Activated CD4-positive, alpha-beta T cell treated with anti-CD3 and anti-CD28 coated beads for 36 hours (primary cell): ENCODE measurements at regions of chr3 and their contacts with region 1.

Region 1: GRCh38 chr3:49469936-49470713 is at the start of gene DAG1:
- DNase-seq: peak; percentile 98
- ATAC-seq: peak; percentile 92
- H3K4me3 Mint-ChIP-seq: peak within 1 kb of the TSS; percentile 81
- H3K27ac Mint-ChIP-seq: peak within 1 kb of the TSS; percentile 92
- H3K4me1 Mint-ChIP-seq: peaks cover 20% of the 10 kb centered on the region
- H3K27me3 Mint-ChIP-seq: no peaks in the 10 kb centered on the region
- total RNA-seq, gene DAG1: 9.0 to 9.2 TPM

Region 2: GRCh38 chr3:48119505-48120193 is 1350.5 kb before region 1 on chr3:
- CTCF ChIA-PET with region 1: no interaction called
- POLR2A ChIA-PET with region 1: no interaction called
- intact Hi-C with region 1: no loop called
- DNase-seq: no peak
- ATAC-seq: no peak
- H3K4me3 Mint-ChIP-seq: no peak overlapping the region
- H3K27ac Mint-ChIP-seq: no peak overlapping the region
- H3K4me1 Mint-ChIP-seq: no peaks in the 10 kb centered on the region
- H3K27me3 Mint-ChIP-seq: no peaks in the 10 kb centered on the region

Region 3: GRCh38 chr3:48685602-48686511 is 784.3 kb before region 1 on chr3 and contains the start of gene NCKIPSD:
- CTCF ChIA-PET with region 1: no interaction called
- POLR2A ChIA-PET with region 1: no interaction called
- intact Hi-C with region 1: loop called in 1 of 2 experiments (anchors 1 kb)
- DNase-seq: peak; percentile 96
- ATAC-seq: peak; percentile 94
- H3K4me3 Mint-ChIP-seq: peak within 1 kb of the TSS; percentile 82
- H3K27ac Mint-ChIP-seq: peak within 1 kb of the TSS; percentile 68
- H3K4me1 Mint-ChIP-seq: peaks cover 16% of the 10 kb centered on the region
- H3K27me3 Mint-ChIP-seq: no peaks in the 10 kb centered on the region
- total RNA-seq, gene NCKIPSD: 61.0 to 67.3 TPM

Region 4: DNA sequence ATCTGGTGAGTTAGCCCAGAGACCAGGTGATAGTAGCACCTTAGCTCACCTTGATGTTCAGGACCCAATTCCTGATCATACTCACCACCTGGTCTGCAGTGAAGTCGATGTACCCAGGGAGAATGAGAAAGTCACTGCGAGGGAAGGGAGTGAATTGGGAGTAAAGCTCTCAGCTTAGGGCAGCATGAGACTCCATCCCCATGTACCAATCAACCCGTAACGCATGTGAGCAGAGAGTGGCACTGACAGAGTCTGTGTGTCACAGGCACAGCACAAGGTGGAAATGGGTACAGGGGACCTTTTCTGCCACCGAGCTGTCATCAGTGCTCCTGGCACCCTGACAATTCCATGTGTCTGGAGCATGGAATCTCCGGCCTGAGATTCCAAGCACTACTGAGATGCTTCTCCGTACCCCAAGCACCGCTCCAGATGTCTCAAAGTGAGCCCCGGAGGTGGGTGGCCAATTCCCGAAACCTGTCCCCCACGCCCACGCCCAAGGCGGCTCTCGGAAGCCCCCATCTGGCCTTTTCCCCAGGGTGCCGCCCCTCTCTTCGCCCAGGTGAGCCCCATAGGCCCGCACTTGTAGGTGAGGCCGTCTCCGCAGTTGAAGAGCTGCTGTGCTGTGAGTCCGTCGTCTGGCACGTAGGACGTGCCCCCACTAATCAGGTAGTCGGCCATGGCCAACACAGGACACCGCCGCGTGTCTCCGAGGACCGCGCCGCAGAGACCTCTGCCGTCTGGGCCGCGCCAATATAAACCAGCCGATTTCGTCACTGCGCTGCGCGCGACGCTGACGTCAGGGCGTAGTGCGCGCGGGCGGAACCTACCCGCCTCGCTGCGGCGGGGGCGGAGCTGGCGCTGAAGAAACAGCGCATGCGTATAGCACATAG is 441.2 kb before region 1 on chr3 and contains the start of gene IMPDH2:
- CTCF ChIA-PET with region 1: interaction called, 3 read pairs
- POLR2A ChIA-PET with region 1: no interaction called
- intact Hi-C with region 1: loop called in 1 of 2 experiments (anchors 2 kb)
- DNase-seq: peak; percentile 96
- ATAC-seq: peak; percentile 93
- H3K4me3 Mint-ChIP-seq: peak within 1 kb of the TSS; percentile 89
- H3K27ac Mint-ChIP-seq: peak within 1 kb of the TSS; percentile 97
- H3K4me1 Mint-ChIP-seq: peaks cover 53% of the 10 kb centered on the region
- H3K27me3 Mint-ChIP-seq: no peaks in the 10 kb centered on the region
- total RNA-seq, gene IMPDH2: 504 to 515 TPM

Region 5: GRCh38 chr3:49171119-49171774 is 298.9 kb before region 1 on chr3 and contains the start of gene KLHDC8B:
- CTCF ChIA-PET with region 1: interaction called, 3 read pairs
- POLR2A ChIA-PET with region 1: no interaction called
- intact Hi-C with region 1: loop called in 1 of 2 experiments (anchors 1 kb)
- DNase-seq: peak; percentile 92
- ATAC-seq: peak; percentile 87
- H3K4me3 Mint-ChIP-seq: peak within 1 kb of the TSS; percentile 78
- H3K27ac Mint-ChIP-seq: peak within 1 kb of the TSS; percentile 76
- H3K4me1 Mint-ChIP-seq: peaks cover 17% of the 10 kb centered on the region
- H3K27me3 Mint-ChIP-seq: no peaks in the 10 kb centered on the region
- total RNA-seq, gene KLHDC8B: 1.2 to 3.1 TPM

Region 6: GRCh38 chr3:49484471-49484870 is 14.3 kb after region 1 on chr3:
- CTCF ChIA-PET with region 1: no interaction called
- POLR2A ChIA-PET with region 1: no interaction called
- intact Hi-C with region 1: no loop called
- DNase-seq: no peak
- ATAC-seq: no peak
- H3K4me3 Mint-ChIP-seq: no peak overlapping the region
- H3K27ac Mint-ChIP-seq: no peak overlapping the region
- H3K4me1 Mint-ChIP-seq: peaks cover 4% of the 10 kb centered on the region
- H3K27me3 Mint-ChIP-seq: no peaks in the 10 kb centered on the region

Region 7: GRCh38 chr3:49553692-49554632 is 83.8 kb after region 1 on chr3 and contains the start of gene BSN:
- CTCF ChIA-PET with region 1: interaction called, 3 read pairs
- POLR2A ChIA-PET with region 1: no interaction called
- intact Hi-C with region 1: loop called in 1 of 2 experiments (anchors 1 kb)
- DNase-seq: peak; percentile 95
- ATAC-seq: peak; percentile 92
- H3K4me3 Mint-ChIP-seq: peak within 1 kb of the TSS; percentile 72
- H3K27ac Mint-ChIP-seq: peak within 1 kb of the TSS; percentile 24
- H3K4me1 Mint-ChIP-seq: peaks cover 11% of the 10 kb centered on the region
- H3K27me3 Mint-ChIP-seq: peaks cover 34% of the 10 kb centered on the region
- total RNA-seq, gene BSN: 0.09 to 0.11 TPM

Region 8: GRCh38 chr3:49802719-49803464 is 332.8 kb after region 1 on chr3 and contains the start of gene INKA1:
- CTCF ChIA-PET with region 1: no interaction called
- POLR2A ChIA-PET with region 1: no interaction called
- intact Hi-C with region 1: loop called in 1 of 2 experiments (anchors 1 kb)
- DNase-seq: peak; percentile 94
- ATAC-seq: peak; percentile 87
- H3K4me3 Mint-ChIP-seq: peak within 1 kb of the TSS; percentile 79
- H3K27ac Mint-ChIP-seq: peak within 1 kb of the TSS; percentile 55
- H3K4me1 Mint-ChIP-seq: peaks cover 40% of the 10 kb centered on the region
- H3K27me3 Mint-ChIP-seq: peaks cover 10% of the 10 kb centered on the region
- total RNA-seq, gene INKA1: 0.50 to 0.70 TPM